ENCODE measurements at regions of chr2 and their contacts with region 1.

Region 1: DNA sequence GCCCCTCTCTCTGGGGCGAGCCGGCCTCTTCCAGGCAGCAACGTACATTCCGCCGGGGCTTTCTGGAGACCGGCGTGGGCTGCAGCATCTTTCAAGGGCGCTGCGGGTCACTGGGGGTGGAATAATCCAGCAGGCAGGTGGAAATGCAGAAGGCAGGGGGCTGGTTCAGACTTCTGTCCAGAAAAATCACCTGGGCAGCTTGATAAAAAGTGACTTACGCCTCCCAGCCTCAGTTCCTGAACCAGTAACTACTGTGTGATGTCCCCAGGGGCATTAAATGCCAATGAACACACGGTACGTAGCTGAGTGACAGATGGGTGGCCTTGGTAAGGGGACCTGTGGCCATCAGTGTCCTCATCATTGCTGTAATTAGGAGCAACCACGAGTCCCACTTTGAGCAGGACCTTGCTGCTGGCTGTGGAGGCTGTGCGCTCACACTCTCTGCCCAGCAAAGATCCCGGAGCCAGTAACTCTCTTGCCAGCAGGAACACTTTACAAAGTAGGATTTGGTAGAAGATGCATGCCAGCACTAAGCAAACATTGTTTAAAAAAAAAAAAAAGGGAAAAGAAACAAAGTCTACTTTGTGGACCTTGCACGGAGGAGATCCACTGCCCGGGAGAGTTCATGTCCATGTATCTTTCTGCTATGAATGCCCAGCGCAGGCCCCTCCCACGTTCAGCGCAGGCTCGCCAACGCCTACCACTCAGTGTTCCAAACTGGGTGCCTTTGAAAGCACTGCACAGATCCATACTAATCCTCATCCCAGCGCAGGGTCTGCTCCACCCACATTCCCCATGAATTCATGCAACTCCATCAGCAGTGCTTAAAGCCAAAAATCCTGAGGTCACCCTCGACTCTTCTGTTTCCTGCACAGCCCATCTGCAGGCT is 177.3 kb downstream of the HDAC4 start:
- DNase-seq: peak; percentile 88

Region 2: DNA sequence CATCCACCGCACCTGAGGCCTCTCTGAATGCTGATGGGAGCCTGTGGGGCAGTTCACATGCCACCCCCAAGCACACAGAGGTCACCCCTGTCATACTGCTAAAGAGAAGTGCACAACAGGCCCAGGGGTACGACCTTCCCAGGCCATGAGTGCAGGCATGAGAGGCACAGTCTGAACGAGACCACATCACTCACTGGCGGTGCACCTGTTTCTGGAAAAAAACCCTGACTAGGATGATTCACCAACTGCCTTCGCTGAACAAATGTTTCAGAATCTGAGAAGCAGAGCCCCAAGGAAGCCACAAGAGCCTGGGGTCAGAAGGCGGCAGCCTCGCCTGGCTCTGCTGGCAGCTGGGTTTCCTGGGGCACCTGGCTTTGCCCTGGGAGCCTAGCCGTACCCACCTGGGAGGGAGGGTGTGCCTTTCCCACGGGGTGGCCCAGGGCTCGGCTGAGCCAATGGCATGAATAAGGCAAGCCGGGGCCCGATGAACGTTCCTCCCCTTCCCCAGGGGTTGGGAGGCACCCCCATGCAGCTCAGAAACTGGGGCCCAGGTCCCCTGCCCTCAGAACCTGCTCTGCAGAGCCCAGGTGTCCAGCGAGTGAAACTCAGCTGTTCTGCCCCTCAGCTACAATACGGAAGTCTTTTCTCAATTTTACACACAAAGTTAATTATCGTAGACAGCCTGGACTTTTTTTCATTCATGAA is 103.4 kb after region 1 on chr2:
- intact Hi-C with region 1: loop called in 1 of 2 experiments (anchors 10 kb)
- DNase-seq: peak; percentile 53

Region 3: DNA sequence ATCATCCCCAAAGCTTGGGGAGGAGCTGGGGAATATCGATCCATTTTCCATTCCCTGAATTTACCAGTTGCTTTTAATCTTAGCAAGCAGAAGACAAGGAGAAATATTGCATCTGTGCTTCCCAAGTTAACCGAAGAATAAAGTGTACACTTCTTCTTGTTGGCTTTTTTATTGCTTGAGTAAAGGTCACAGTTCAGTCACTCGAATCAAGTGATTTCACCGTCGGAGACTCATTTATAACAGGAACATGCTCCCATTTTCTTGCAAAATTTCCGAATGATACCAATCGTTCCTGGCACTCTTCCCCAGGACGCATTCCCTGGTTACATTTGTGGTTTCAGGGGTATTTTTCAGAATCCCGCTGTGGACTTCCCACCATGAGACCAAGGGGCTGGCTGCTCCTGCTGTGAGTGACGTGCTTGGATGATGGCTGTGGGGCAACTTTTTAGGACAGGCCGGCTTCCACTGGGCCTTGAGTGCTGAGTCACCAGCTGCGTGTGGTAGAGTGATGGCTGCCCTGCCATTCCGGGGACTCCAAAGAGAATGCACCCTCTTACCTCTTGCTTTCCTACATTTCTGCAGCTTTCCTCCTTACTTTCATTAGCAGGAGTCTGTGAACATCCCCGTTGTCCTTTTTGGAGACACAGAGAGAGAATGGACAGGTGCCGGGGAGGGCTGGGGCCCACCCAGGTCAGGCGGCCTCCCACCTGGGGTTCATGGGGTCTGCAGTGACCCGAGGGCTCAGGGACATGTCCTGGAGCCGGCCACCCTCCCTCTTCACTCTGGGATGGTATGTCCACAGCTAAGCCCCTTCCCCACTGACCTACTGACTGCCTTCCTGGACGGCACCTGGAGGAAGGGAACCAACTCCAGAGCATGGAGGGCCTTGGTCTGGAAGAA is 238.0 kb after region 1 on chr2:
- intact Hi-C with region 1: no loop called
- DNase-seq: peak; percentile 41

Measured in posterior vena cava (tissue), 2 donors.